Naive thymus-derived CD4-positive, alpha-beta T cell (primary cell): ENCODE measurements at regions of chr20 and their contacts with region 1.

Region 1: DNA sequence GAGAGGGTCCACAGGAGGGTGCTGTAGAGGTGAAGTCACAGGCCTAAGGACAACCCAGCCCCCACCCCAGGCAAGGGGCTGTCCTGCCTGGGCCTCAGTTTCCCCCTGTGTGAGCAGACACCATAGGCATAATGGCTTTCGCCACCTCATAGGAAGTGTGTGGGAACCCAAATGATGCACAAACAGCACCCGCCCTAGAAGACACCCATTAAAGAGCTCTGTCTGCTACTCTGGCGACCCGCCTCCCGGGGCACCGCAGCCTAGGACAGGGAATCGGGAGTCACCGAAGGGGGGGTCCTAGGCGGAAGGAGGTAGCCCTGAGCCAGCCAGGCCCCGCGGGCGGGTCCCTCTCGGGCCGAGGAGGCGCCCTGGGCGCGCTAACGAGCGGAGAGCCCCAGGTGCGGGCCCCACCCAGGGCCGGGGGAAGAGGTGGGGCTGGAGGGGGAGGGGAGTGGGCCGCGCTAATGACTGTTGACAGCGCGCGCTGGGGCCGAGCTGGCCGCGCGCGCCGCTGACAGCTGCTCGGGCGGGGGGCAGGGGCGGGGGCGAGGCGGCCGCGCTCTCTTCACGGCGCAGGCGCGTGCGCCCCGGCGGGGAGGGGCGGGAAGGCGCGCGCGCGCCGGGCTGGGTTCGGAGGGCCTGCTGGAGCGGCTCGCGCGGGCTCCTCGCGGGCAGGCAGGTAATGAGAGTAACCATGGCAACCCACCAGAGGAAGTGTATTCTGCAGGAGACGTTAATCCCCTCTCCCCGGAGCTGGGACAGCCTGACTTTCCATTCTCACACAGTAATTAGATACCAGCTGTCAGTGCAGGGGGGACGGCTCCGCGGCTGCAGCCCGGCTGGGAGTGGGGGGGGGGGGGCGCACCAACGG is 48.9 kb downstream of the NOL4L start:
- DNase-seq: peak; percentile 59 to 91 (median 78)
- ATAC-seq: peak; percentile 77
- H3K4me3 ChIP-seq: peak overlapping the region; percentile 77
- H3K4me3 Mint-ChIP-seq: peak overlapping the region; percentile 82 to 99 (median 88)
- H3K27ac ChIP-seq: peak overlapping the region; percentile 86
- H3K27ac Mint-ChIP-seq: peak overlapping the region; percentile 84 to 98 (median 95)
- H3K4me1 ChIP-seq: peaks cover 73 to 77% of the 10 kb centered on the region in 2 donors
- H3K4me1 Mint-ChIP-seq: peaks cover 61 to 87% (median 84%) of the 10 kb centered on the region in 7 donors
- H3K27me3 ChIP-seq: no peaks in the 10 kb centered on the region
- H3K27me3 Mint-ChIP-seq: no peaks in the 10 kb centered on the region

Region 2: GRCh38 chr20:32325706-32326503 is 210.3 kb before region 1 on chr20:
- CTCF ChIA-PET with region 1: no interaction called
- POLR2A ChIA-PET with region 1: no interaction called
- intact Hi-C with region 1: no loop called
- DNase-seq: no peak
- ATAC-seq: no peak
- H3K4me3 ChIP-seq: no peak overlapping the region
- H3K4me3 Mint-ChIP-seq: no peak overlapping the region
- H3K27ac ChIP-seq: no peak overlapping the region
- H3K27ac Mint-ChIP-seq: peak overlapping the region in 4 of 9 donors; percentile 3 to 70 (median 31)
- H3K4me1 ChIP-seq: no peaks in the 10 kb centered on the region
- H3K4me1 Mint-ChIP-seq: peaks cover 0 to 2% (median 0%) of the 10 kb centered on the region in 7 donors
- H3K27me3 ChIP-seq: no peaks in the 10 kb centered on the region
- H3K27me3 Mint-ChIP-seq: no peaks in the 10 kb centered on the region

Region 3: GRCh38 chr20:32484958-32485769 is 51.0 kb before region 1 on chr20:
- CTCF ChIA-PET with region 1: interaction called, 3 read pairs
- POLR2A ChIA-PET with region 1: interaction called, 5 read pairs
- intact Hi-C with region 1: loop called (anchors 1 to 5 kb)
- DNase-seq: peak; percentile 60 to 94 (median 91)
- ATAC-seq: peak; percentile 92
- H3K4me3 ChIP-seq: peak overlapping the region; percentile 55
- H3K4me3 Mint-ChIP-seq: peak overlapping the region; percentile 82 to 95 (median 92)
- H3K27ac ChIP-seq: peak overlapping the region; percentile 67
- H3K27ac Mint-ChIP-seq: peak overlapping the region; percentile 80 to 98 (median 88)
- H3K4me1 ChIP-seq: peaks cover 8 to 34% of the 10 kb centered on the region in 2 donors
- H3K4me1 Mint-ChIP-seq: peaks cover 20 to 58% (median 51%) of the 10 kb centered on the region in 7 donors
- H3K27me3 ChIP-seq: no peaks in the 10 kb centered on the region
- H3K27me3 Mint-ChIP-seq: peaks cover 0 to 5% (median 0%) of the 10 kb centered on the region in 5 donors

Region 4: DNA sequence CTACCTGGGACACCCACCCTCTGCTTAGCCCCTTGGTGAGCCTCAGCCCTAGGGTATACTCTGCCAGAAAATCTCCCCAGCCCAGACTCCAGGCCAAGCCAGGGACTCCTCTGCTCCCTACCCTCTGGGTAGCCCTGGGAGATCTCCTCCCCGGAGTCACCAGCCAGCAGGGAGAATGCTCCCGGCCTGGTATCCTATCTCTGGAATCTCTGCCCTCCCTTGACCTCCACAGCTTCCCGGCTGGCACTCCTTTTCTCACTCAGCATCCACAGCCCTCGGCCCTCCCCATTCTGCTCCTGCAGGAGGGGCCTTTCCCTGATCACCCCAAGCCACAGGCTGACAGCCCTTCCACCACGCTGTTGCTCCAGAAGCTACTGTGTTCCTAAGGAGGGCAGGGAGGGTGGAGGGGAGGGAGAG is 26.3 kb after region 1 on chr20:
- CTCF ChIA-PET with region 1: interaction called, 5 read pairs
- POLR2A ChIA-PET with region 1: interaction called, 12 read pairs
- intact Hi-C with region 1: no loop called
- DNase-seq: no peak
- ATAC-seq: no peak
- H3K4me3 ChIP-seq: no peak overlapping the region
- H3K4me3 Mint-ChIP-seq: peak overlapping the region in 9 of 10 donors; percentile 55 to 75 (median 67)
- H3K27ac ChIP-seq: peak overlapping the region; percentile 43
- H3K27ac Mint-ChIP-seq: peak overlapping the region in 8 of 9 donors; percentile 71 to 93 (median 84)
- H3K4me1 ChIP-seq: peaks cover 7 to 35% of the 10 kb centered on the region in 2 donors
- H3K4me1 Mint-ChIP-seq: peaks cover 12 to 64% (median 52%) of the 10 kb centered on the region in 7 donors
- H3K27me3 ChIP-seq: no peaks in the 10 kb centered on the region
- H3K27me3 Mint-ChIP-seq: no peaks in the 10 kb centered on the region

Region 5: GRCh38 chr20:32652739-32653526 is 116.7 kb after region 1 on chr20:
- CTCF ChIA-PET with region 1: interaction called, 16 read pairs
- POLR2A ChIA-PET with region 1: interaction called, 4 read pairs
- intact Hi-C with region 1: loop called in 1 of 2 experiments (anchors 5 kb)
- DNase-seq: peak; percentile 77 to 92 (median 86)
- ATAC-seq: peak; percentile 97
- H3K4me3 ChIP-seq: no peak overlapping the region
- H3K4me3 Mint-ChIP-seq: peak overlapping the region in 9 of 10 donors; percentile 26 to 65 (median 57)
- H3K27ac ChIP-seq: no peak overlapping the region
- H3K27ac Mint-ChIP-seq: peak overlapping the region in 4 of 9 donors; percentile 15 to 59 (median 32)
- H3K4me1 ChIP-seq: peaks cover 5 to 6% of the 10 kb centered on the region in 2 donors
- H3K4me1 Mint-ChIP-seq: peaks cover 0 to 14% (median 12%) of the 10 kb centered on the region in 7 donors
- H3K27me3 ChIP-seq: no peaks in the 10 kb centered on the region
- H3K27me3 Mint-ChIP-seq: peaks cover 0 to 4% (median 0%) of the 10 kb centered on the region in 5 donors

Region 6: DNA sequence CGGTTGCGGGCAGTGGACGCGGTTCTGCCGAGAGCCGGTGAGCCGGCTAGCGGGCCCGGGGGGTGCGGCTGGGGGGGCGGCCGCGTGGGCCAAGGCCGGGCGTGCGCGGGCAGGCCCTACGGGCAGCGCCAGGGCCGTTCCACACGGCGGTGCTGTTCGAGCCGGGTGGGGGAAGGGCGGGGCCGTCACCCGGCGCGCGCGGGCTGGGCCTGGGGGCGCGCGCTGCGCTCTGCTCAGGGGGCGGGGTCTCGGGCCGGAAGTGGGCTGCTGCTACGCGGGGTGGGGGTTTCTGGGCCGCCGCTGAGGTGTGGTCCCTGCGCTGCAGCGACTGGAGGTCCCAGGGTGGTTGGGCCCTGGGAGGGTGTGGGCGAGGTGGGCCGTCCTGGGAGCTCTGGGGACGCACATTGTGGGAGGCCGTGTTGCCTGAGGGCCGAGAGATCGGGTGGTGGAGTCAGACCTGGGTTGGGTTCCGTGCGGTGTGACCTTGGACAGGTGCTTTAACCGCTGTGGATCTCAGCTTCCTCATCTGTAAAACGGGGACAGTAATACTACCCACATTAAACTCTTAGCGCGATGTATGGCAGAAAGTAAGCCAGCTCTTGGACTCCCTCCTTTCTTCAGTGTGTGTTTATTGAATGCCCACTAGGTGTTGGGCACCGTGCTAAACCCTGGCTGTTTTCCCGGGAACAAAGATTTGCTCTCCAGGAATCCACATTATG is 284.0 kb after region 1 on chr20:
- CTCF ChIA-PET with region 1: no interaction called
- POLR2A ChIA-PET with region 1: no interaction called
- intact Hi-C with region 1: loop called (anchors 2 to 5 kb)
- DNase-seq: peak in 7 of 9 donors; percentile 81 to 96 (median 93)
- ATAC-seq: peak; percentile 85
- H3K4me3 ChIP-seq: peak overlapping the region; percentile 93
- H3K4me3 Mint-ChIP-seq: peak overlapping the region; percentile 89 to 99 (median 94)
- H3K27ac ChIP-seq: peak overlapping the region; percentile 85
- H3K27ac Mint-ChIP-seq: peak overlapping the region; percentile 66 to 99 (median 98)
- H3K4me1 ChIP-seq: peaks cover 22 to 34% of the 10 kb centered on the region in 2 donors
- H3K4me1 Mint-ChIP-seq: peaks cover 28 to 49% (median 44%) of the 10 kb centered on the region in 7 donors
- H3K27me3 ChIP-seq: no peaks in the 10 kb centered on the region
- H3K27me3 Mint-ChIP-seq: no peaks in the 10 kb centered on the region

Region 7: GRCh38 chr20:33026072-33026778 is 490.0 kb after region 1 on chr20:
- CTCF ChIA-PET with region 1: no interaction called
- POLR2A ChIA-PET with region 1: no interaction called
- intact Hi-C with region 1: no loop called
- DNase-seq: no peak
- ATAC-seq: no peak
- H3K4me3 ChIP-seq: no peak overlapping the region
- H3K4me3 Mint-ChIP-seq: no peak overlapping the region
- H3K27ac ChIP-seq: no peak overlapping the region
- H3K27ac Mint-ChIP-seq: no peak overlapping the region
- H3K4me1 ChIP-seq: no peaks in the 10 kb centered on the region
- H3K4me1 Mint-ChIP-seq: peaks cover 0 to 8% (median 0%) of the 10 kb centered on the region in 7 donors
- H3K27me3 ChIP-seq: no peaks in the 10 kb centered on the region
- H3K27me3 Mint-ChIP-seq: no peaks in the 10 kb centered on the region

Region 8: DNA sequence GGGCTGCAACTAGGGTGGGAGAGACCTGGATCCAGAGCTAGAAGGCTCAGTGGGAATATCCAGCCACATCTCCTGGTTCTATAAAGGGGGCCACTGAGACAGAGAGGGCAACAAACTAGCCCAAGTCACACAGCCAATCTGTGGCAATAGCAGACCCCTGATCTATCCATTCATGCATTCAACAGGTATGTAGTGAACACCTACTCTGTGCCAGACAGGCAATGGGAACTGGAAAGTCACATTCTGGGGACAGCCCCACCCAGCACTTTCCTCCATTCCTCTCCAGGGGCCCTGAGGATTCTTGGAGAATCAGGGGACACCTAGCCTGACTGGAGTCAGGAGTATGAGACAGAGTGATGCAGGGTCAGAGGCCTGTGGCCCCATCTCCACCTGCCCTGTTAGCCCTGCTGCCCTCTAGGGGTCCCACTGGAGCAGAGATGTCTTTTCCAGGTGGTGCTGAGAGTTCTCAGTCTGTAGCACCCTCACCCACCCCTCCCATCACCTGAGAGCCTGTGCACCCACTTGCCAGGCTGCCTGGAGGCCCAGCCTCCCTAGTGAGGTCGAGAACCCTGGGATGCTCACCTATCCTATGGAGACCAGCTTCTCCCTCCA is 645.4 kb after region 1 on chr20:
- CTCF ChIA-PET with region 1: no interaction called
- POLR2A ChIA-PET with region 1: no interaction called
- intact Hi-C with region 1: no loop called
- DNase-seq: no peak
- ATAC-seq: no peak
- H3K4me3 ChIP-seq: no peak overlapping the region
- H3K4me3 Mint-ChIP-seq: no peak overlapping the region
- H3K27ac ChIP-seq: no peak overlapping the region
- H3K27ac Mint-ChIP-seq: no peak overlapping the region
- H3K4me1 ChIP-seq: no peaks in the 10 kb centered on the region
- H3K4me1 Mint-ChIP-seq: no peaks in the 10 kb centered on the region
- H3K27me3 ChIP-seq: no peaks in the 10 kb centered on the region
- H3K27me3 Mint-ChIP-seq: no peaks in the 10 kb centered on the region